B cell (primary cell): ENCODE measurements at regions of chr1 and their contacts with region 1.

Region 1: DNA sequence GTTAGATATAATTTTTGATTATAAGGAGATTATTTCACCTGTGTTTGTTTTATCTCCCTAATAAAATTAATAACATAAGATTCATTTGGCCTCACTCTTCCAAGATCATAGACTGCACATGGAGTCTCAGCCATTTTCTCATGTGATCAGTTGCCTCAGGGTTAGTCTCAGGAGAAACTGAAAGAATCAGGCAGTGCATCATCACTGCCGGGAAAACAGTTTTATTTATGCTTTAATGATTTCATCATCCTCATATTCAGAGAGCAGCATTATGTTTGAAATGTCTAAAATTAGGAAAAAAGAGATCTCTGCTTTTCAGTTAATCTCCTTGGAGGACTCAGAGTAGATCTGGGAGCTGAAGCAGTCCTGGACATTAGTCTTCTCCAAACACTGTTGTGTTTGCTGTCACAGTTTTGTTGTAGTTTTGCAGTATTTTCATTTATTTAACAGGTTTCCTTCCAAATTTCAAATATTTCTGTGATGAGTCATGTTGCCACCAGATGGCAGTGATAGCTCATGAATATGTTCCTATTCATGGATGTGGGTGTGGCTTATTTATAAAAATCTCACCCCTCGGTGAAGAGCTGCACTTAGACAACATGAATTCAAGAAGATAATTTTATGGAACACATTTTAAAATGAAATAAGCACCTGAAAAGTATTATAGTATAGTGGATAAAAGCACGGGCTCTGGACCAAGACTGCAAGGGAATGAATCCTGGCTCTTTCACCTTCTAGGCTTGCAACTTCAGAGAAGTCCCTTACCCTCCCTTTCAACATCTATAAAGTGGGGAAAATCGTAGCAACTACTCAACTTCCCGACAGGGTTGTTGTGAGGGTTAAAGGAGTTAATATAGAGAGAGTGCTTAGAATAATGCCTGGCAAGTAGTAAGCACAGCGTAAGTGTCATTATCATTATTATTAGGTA is 31.2 kb downstream of the CHD1L start:
- DNase-seq: peak; percentile 59
- ATAC-seq: no peak
- H3K4me3 ChIP-seq: no peak overlapping the region
- H3K4me3 Mint-ChIP-seq: no peak overlapping the region
- H3K27ac ChIP-seq: no peak overlapping the region
- H3K27ac Mint-ChIP-seq: no peak overlapping the region
- H3K4me1 ChIP-seq: no peaks in the 10 kb centered on the region
- H3K4me1 Mint-ChIP-seq: no peaks in the 10 kb centered on the region
- H3K27me3 ChIP-seq: no peaks in the 10 kb centered on the region
- H3K27me3 Mint-ChIP-seq: no peaks in the 10 kb centered on the region
- CTCF ChIP-seq: peak; percentile 78

Region 2: DNA sequence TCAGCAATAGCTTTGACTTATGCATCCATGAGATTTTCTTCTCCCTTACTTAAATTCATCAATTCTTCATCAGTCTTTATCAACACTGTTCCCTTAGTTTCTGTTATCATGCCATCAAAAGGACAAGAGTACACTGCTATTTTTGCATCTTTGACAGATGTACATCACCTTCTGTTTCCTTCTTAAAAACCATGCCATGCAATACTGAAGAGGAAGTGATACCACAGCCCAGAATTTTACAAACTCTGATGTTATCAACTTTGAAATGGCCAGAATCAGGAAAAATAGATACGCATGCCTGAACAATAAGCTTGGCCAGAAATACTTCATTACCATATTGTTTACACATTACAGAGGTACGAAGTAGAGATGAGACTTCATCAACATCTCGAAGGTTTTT is 69.6 kb before region 1 on chr1:
- CTCF ChIA-PET with region 1: no interaction called
- POLR2A ChIA-PET with region 1: no interaction called
- intact Hi-C with region 1: no loop called
- DNase-seq: peak; percentile 26
- ATAC-seq: peak; percentile 60
- H3K4me3 ChIP-seq: peak overlapping the region in 1 of 5 experiments; percentile 29
- H3K4me3 Mint-ChIP-seq: peak overlapping the region; percentile 20
- H3K27ac ChIP-seq: peak overlapping the region; percentile 30 to 62
- H3K27ac Mint-ChIP-seq: peak overlapping the region; percentile 54
- H3K4me1 ChIP-seq: peaks cover 13 to 22% of the 10 kb centered on the region in 2 donors
- H3K4me1 Mint-ChIP-seq: peaks cover 32% of the 10 kb centered on the region
- H3K27me3 ChIP-seq: no peaks in the 10 kb centered on the region
- H3K27me3 Mint-ChIP-seq: no peaks in the 10 kb centered on the region
- CTCF ChIP-seq: no peak

Region 3: DNA sequence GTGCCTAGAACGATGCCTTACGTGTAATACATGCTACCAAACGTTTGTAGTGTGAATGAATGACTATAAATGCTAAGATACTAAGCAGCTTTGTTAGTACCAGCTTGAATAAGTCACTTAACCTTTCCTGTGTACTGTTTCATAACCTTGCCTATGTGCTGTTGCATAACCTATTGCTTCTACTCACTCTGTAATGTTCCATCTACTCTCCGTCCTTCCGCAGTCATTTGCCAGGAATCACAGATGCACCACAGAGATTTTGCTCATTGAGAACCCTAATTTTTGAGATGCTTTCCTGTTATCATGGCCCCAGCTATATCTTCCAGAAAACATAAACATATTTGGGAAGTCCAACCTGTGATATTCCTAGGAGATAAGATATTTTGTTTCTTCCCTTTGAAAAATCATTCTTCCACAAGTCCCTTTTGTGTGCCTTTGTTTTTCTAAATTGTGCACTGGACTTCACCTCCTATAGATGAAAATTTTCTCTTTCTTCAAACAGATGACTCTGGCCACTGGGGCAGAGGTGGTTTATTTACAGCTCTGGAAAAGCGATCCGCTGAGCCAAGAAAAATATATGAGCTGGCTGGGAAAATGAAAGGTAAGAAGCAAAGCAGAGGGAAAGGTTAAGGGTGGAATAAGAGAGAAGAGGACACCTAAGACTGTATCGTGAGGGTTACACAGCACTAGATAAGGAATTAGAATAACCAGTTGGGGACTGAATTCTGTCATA is 13.6 kb after region 1 on chr1:
- CTCF ChIA-PET with region 1: interaction called, 12 read pairs
- POLR2A ChIA-PET with region 1: no interaction called
- intact Hi-C with region 1: no loop called
- DNase-seq: no peak
- ATAC-seq: no peak
- H3K4me3 ChIP-seq: no peak overlapping the region
- H3K4me3 Mint-ChIP-seq: no peak overlapping the region
- H3K27ac ChIP-seq: no peak overlapping the region
- H3K27ac Mint-ChIP-seq: no peak overlapping the region
- H3K4me1 ChIP-seq: no peaks in the 10 kb centered on the region
- H3K4me1 Mint-ChIP-seq: no peaks in the 10 kb centered on the region
- H3K27me3 ChIP-seq: no peaks in the 10 kb centered on the region
- H3K27me3 Mint-ChIP-seq: no peaks in the 10 kb centered on the region
- CTCF ChIP-seq: no peak

Region 4: DNA sequence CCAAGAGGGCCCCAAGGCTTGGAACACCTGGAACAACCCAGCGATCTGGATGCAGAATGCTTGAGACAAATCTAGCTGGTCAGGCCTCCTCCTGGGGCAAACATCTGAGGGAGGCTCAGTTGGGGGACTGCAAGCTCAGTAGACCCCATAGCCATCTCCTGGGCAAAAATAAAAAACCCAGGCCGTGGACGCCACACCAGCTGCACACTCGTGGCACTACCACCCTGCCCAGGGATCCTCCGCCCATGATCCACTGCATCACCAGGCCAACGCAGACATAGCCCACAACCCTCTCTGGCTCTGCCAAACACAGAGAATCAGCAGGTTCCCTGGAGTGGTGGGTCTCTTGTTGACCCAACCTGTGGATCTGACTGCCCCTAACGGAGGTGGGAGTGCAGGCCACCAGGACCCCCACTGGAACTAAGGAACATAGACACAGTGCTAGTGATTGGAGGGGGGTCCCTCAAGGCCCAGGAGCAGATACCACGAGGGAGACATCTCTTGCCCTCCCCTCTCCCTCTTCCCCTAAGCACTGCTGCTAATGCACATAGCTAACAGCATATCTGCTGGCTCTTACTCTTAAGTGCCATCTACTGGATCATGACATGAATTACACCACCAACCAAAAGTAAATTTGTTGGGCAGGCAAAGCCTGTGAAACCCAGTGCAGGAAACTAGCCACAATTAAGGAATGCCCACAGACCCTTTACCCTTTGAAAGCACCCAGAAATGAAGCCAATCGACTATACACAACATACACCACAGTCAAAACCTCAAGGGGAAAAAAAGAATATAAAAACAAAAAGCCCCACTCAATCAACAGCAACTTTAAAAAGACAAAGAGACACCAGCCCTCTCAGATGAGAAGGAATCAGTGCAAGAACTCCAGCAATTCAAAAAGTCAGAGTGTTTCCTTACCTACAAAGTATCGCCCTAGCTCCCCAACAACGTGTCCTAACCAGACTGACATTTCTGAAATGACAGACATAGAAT is 116.2 kb after region 1 on chr1:
- CTCF ChIA-PET with region 1: interaction called, 14 read pairs
- POLR2A ChIA-PET with region 1: no interaction called
- intact Hi-C with region 1: no loop called
- DNase-seq: peak; percentile 38
- ATAC-seq: peak; percentile 39
- H3K4me3 ChIP-seq: no peak overlapping the region
- H3K4me3 Mint-ChIP-seq: no peak overlapping the region
- H3K27ac ChIP-seq: no peak overlapping the region
- H3K27ac Mint-ChIP-seq: no peak overlapping the region
- H3K4me1 ChIP-seq: no peaks in the 10 kb centered on the region
- H3K4me1 Mint-ChIP-seq: no peaks in the 10 kb centered on the region
- H3K27me3 ChIP-seq: peaks cover 0 to 13% (median 0%) of the 10 kb centered on the region in 4 experiments
- H3K27me3 Mint-ChIP-seq: peaks cover 7% of the 10 kb centered on the region
- CTCF ChIP-seq: peak; percentile 69